Sigmoid colon (tissue), 7 donors: ENCODE measurements at regions of chr14 and their contacts with region 1.

Region 1: GRCh38 chr14:52961060-52961639 is 10.3 kb upstream of the FERMT2 start:
- DNase-seq: peak; percentile 77
- H3K4me3 ChIP-seq: no peak overlapping the region
- H3K27ac ChIP-seq: peak overlapping the region; percentile 24 to 52 (median 40)
- H3K4me1 ChIP-seq: peaks cover 0 to 11% (median 5%) of the 10 kb centered on the region in 4 donors
- H3K27me3 ChIP-seq: no peaks in the 10 kb centered on the region
- CTCF ChIP-seq: peak; percentile 59 to 77 (median 69)
- EP300 ChIP-seq: no peak
- POLR2A ChIP-seq: no peak

Region 2: DNA sequence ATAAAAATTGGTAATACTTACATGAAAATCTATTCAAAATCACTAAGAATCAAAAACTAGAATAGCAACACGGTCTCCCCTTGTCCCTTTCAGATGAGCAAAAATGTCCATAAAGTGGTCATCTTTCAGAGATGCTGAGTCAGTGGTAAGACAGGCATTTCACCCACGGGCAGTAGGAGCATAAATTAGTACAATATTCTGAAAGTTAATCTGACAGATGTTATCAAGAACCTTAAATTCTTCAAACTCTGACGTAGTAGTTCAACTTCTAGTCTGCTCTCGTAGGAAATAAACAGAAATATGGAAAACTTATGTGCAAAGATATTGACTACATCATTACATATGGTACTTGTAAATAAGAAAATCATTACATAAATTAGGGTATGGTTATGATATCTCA is 136.6 kb before region 1 on chr14:
- intact Hi-C with region 1: loop called (anchors 1 kb)
- DNase-seq: no peak
- H3K4me3 ChIP-seq: no peak overlapping the region
- H3K27ac ChIP-seq: no peak overlapping the region
- H3K4me1 ChIP-seq: peaks cover 0 to 3% (median 0%) of the 10 kb centered on the region in 4 donors
- H3K27me3 ChIP-seq: no peaks in the 10 kb centered on the region
- CTCF ChIP-seq: no peak
- EP300 ChIP-seq: no peak
- POLR2A ChIP-seq: no peak

Region 3: DNA sequence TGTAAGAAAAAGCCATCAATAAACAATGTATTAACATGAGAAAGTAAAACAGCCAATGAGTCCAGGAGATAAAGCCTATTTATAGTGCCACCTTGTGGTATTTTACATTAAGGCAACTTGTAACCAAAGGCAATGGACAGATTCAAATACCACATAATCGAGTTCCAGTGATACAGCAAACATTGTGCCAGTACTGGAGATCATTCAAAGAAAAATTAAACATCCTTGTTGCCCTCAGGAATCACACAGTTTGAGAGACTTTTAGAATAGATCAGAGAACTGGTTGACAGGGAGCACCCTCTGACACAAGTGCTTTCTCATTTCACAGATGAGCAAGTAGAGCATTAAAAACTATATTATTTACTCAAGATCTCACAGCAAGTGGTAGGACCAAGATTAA is 93.9 kb after region 1 on chr14:
- intact Hi-C with region 1: loop called (anchors 5 kb)
- DNase-seq: no peak
- H3K4me3 ChIP-seq: no peak overlapping the region
- H3K27ac ChIP-seq: peak overlapping the region in 1 of 4 donors; percentile 24
- H3K4me1 ChIP-seq: peaks cover 0 to 7% (median 0%) of the 10 kb centered on the region in 4 donors
- H3K27me3 ChIP-seq: no peaks in the 10 kb centered on the region
- CTCF ChIP-seq: peak; percentile 31 to 81 (median 64)
- EP300 ChIP-seq: no peak
- POLR2A ChIP-seq: no peak

Region 4: DNA sequence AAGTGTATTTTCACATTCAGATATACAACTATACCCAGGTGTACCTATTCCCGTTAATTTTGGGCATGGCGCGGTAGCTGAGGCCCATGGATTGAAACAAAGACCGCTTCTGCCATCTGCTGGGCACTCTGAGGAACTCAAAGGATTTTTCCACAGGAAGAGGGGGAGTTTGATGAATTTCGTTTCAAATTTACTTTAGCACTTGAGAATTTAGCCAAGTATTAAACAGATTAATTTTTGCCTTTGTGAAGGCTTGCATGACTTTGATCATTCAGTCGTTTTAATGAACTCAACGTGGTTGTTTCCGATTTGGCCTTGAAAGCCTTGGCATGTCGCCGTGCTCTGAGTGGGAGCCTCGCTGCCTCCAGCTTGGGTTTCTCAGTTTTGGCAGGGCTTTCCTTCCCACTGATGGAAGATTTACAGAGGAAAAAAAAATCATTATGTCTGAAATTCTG is 345.1 kb after region 1 on chr14:
- intact Hi-C with region 1: loop called (anchors 10 kb)
- DNase-seq: peak; percentile 73
- H3K4me3 ChIP-seq: peak overlapping the region; percentile 15 to 45 (median 39)
- H3K27ac ChIP-seq: peak overlapping the region; percentile 15 to 71 (median 52)
- H3K4me1 ChIP-seq: peaks cover 0 to 25% (median 17%) of the 10 kb centered on the region in 4 donors
- H3K27me3 ChIP-seq: no peaks in the 10 kb centered on the region
- CTCF ChIP-seq: peak; percentile 53 to 78 (median 72)
- EP300 ChIP-seq: no peak
- POLR2A ChIP-seq: no peak